OCI-LY7 (cell line): ENCODE measurements at regions of chr6 and their contacts with region 1.

Region 1: GRCh38 chr6:4135665-4136353 is 434 bp upstream of the ECI2 start:
- DNase-seq: peak; percentile 92
- H3K4me3 ChIP-seq: peak overlapping the region; percentile 73
- H3K27ac ChIP-seq: peak overlapping the region; percentile 57
- H3K4me1 ChIP-seq: peaks cover 46% of the 10 kb centered on the region
- CTCF ChIP-seq: peak; percentile 27; the same call in 1 of the 2 replicates

Region 2: GRCh38 chr6:2765166-2765895 is 1370.5 kb before region 1 on chr6 and contains the start of gene WRNIP1:
- CTCF ChIA-PET with region 1: no interaction called
- POLR2A ChIA-PET with region 1: no interaction called
- intact Hi-C with region 1: loop called (anchors 5 kb)
- DNase-seq: peak; percentile 99
- H3K4me3 ChIP-seq: peak within 1 kb of the TSS; percentile 91
- H3K27ac ChIP-seq: peak within 1 kb of the TSS; percentile 73
- H3K4me1 ChIP-seq: peaks cover 26% of the 10 kb centered on the region
- CTCF ChIP-seq: peak; percentile 70
- total RNA-seq, gene WRNIP1: 38.1 and 54.2 TPM in 2 replicates

Region 3: GRCh38 chr6:3356056-3356761 is 779.6 kb before region 1 on chr6:
- CTCF ChIA-PET with region 1: no interaction called
- POLR2A ChIA-PET with region 1: no interaction called
- intact Hi-C with region 1: loop called (anchors 10 kb)
- DNase-seq: peak; percentile 95
- H3K4me3 ChIP-seq: peak overlapping the region; percentile 66
- H3K27ac ChIP-seq: peak overlapping the region; percentile 84
- H3K4me1 ChIP-seq: peaks cover 57% of the 10 kb centered on the region
- CTCF ChIP-seq: no peak

Region 4: DNA sequence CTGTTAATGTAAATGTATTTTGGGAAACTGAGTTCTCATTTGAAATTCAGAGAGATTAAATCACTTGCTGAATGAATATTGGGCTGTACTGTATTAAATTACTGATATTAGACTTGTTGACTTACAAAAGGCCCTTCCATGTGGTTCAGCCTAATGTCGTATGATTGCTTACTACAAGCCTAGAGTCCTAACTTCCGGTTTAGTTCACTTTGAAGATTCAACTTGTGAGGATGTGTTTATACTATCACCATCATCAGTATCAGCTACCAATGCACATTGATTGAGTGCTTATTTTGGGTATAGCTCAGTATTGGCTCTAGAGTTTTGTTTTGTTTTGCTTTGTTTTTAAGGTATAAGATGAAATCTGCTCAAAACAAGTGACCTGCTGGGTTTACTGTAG is 105.1 kb before region 1 on chr6:
- CTCF ChIA-PET with region 1: no interaction called
- POLR2A ChIA-PET with region 1: no interaction called
- intact Hi-C with region 1: no loop called
- DNase-seq: peak; percentile 31
- H3K4me3 ChIP-seq: no peak overlapping the region
- H3K27ac ChIP-seq: no peak overlapping the region
- H3K4me1 ChIP-seq: peaks cover 20% of the 10 kb centered on the region
- CTCF ChIP-seq: no peak

Region 5: DNA sequence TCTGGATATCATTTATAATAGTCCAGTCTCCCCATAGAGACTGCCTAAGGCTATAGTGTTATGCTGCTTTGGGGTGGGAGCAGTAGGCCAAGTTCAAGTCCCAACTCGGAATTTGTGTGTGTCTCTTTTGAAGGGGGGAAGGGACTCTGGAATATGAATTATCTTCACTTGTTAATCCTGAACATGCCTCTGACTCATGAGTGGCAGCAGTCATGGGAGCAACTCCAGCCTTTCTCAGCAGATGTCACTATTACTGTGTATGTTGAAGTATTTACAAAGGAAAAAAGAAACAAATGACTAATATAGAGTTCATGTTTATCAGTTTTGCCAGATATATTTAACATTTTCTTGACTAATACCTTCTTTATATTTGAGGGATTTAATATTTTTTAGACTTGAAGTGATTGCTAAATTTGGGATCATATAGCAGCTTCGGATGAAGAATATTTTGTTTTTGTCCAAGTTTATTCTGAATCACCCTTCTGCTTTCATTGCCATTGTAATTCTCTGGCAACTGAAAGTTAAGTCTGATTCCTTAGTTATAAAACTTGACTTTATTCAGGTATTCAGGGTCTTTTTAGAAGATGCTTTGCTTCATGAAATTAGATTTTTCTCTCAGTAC is 80.3 kb before region 1 on chr6:
- CTCF ChIA-PET with region 1: interaction called, 11 read pairs
- POLR2A ChIA-PET with region 1: interaction called, 3 read pairs
- intact Hi-C with region 1: no loop called
- DNase-seq: peak; percentile 7
- H3K4me3 ChIP-seq: no peak overlapping the region
- H3K27ac ChIP-seq: no peak overlapping the region
- H3K4me1 ChIP-seq: no peaks in the 10 kb centered on the region
- CTCF ChIP-seq: peak; percentile 57

Region 6: DNA sequence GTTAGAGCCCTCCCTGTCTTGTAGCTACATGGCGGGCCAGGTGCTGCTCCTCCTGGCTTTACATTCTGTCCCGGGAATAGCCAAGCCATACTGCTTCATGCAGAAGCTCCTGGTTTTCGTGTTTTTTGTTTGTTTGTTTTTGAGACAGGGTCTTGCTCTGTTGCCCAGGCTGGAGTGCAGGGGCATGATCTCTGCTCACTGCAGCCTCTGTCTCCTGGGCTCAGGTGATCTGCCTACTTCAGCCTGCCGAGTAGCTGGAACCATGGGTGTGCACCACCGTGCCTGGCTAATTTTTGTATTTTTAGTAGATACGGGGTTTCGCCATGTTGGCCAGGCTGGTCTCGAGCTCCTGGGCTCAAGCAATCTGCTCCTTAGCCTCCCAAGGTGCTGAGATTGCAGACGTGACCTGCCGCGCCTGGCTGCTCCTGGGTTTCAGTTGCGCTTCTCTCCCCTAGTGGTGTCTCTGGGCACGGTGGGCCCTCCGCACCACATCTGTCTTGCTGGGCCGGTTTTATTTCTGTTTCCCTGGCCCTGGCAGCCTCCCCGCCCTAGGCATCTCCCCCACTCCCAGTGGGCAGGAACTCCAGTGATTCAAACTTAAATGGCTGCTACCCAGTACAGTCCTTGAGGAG is 653.3 kb after region 1 on chr6:
- CTCF ChIA-PET with region 1: no interaction called
- POLR2A ChIA-PET with region 1: no interaction called
- intact Hi-C with region 1: loop called (anchors 10 kb)
- DNase-seq: peak; percentile 79
- H3K4me3 ChIP-seq: peak overlapping the region; percentile 27
- H3K27ac ChIP-seq: peak overlapping the region; percentile 33
- H3K4me1 ChIP-seq: peaks cover 24% of the 10 kb centered on the region
- CTCF ChIP-seq: peak; percentile 60